Left ventricle myocardium superior (tissue), 1 donor: ENCODE measurements at regions of chr12 and their contacts with region 1.

Region 1: GRCh38 chr12:53675651-53676453 is at the start of gene ATP5MC2:
- DNase-seq: peak; percentile 98
- ATAC-seq: peak; percentile 95
- total RNA-seq, gene ATP5MC2: 623 TPM

Region 2: DNA sequence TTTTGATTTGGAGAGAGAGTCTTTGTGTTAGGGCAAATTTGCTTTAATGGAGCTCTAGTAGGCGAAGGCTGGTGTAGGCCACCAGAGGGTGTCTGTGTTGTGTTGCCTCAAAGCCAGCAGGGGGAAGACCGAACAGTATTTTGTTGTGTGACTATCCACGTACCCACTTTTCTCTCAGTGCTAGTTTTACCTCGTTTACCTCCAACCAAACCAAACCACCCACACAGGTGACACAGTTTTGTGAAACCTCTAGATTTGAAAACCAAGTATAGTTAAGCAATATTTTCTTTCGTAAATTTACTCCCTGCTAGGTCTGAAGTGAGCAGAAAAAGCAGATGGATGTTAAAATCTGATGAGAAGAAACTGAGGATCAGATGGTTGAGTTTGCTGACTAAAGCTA is 132.3 kb before region 1 on chr12:
- intact Hi-C with region 1: loop called (anchors 5 kb)
- DNase-seq: peak; percentile 61
- ATAC-seq: peak; percentile 91